ENCODE measurements at regions of chr1 and their contacts with region 1.

Region 1: DNA sequence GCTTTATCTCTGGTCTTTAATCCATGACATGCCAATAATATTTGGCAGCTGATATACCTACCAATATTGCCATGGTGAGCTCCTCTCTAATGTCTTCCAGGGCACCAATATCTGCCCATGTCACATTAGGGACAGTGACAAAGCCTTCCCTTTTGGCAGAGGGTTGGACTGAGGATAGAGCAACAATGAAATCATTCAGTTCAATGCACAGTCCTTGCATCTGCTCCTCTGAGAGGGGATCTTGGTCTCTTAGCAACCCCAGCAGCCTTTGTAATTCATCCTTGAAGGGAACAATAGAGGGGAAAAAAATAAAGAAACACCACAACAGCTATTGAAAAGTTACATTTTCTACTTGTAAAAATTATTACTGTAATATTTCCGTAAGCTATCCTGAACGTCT is 42.3 kb downstream of the NVL start:
- DNase-seq: no peak
- H3K4me3 ChIP-seq: no peak overlapping the region
- H3K27ac ChIP-seq: no peak overlapping the region
- H3K4me1 ChIP-seq: no peaks in the 10 kb centered on the region
- H3K27me3 ChIP-seq: no peaks in the 10 kb centered on the region
- CTCF ChIP-seq: no peak

Region 2: GRCh38 chr1:224149713-224150112 is 138.0 kb before region 1 on chr1:
- CTCF ChIA-PET with region 1: no interaction called
- POLR2A ChIA-PET with region 1: no interaction called
- intact Hi-C with region 1: loop called (anchors 10 kb)
- DNase-seq: no peak
- H3K4me3 ChIP-seq: no peak overlapping the region
- H3K27ac ChIP-seq: no peak overlapping the region
- H3K4me1 ChIP-seq: peaks cover 7% of the 10 kb centered on the region
- H3K27me3 ChIP-seq: no peaks in the 10 kb centered on the region
- CTCF ChIP-seq: no peak

Region 3: GRCh38 chr1:224203243-224204016 is 84.3 kb before region 1 on chr1:
- CTCF ChIA-PET with region 1: no interaction called
- POLR2A ChIA-PET with region 1: no interaction called
- intact Hi-C with region 1: no loop called
- DNase-seq: peak; percentile 57 to 60
- H3K4me3 ChIP-seq: no peak overlapping the region
- H3K27ac ChIP-seq: peak overlapping the region; percentile 17
- H3K4me1 ChIP-seq: peaks cover 40% of the 10 kb centered on the region
- H3K27me3 ChIP-seq: no peaks in the 10 kb centered on the region
- CTCF ChIP-seq: no peak